Gastrocnemius medialis (tissue), 4 donors: ENCODE measurements at regions of chr9 and their contacts with region 1.

Region 1: DNA sequence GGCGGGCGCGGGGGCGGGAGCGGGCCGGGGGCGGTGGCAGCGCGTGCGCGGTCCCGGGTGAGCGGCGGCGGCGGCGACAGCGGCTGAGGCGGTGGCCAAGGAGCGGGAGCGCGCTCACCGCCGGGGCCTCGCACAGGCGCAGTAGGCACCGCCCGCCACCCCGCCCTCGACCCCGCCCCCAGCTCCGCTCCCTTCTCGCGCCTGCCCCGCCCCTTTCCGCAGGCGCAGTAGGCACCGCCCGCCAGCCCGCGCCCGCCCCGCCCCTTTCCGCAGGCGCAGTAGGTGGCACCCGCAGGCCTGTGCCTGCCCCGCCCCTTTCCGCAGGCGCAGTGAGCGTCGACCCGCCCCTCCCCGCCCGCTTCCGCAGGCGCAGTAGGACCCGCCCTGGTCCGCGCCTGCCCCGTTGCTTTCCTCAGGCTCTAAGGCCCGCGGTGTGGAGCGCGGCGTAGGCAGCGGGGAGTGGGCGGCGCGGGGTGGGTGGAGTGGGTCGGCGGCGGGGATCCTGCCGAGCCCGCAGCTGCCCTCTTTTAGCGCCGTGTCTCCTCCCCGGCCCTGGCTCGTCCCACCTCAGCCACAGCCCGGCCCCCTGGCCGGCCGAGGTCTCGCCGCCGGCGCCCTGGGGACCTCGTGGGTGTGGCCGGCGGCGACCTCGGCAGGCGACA is at the start of gene CAMSAP1:
- DNase-seq: peak; percentile 87 to 91
- ATAC-seq: peak; percentile 62 to 68
- H3K4me3 ChIP-seq: peak within 1 kb of the TSS; percentile 70 to 81 (median 72)
- H3K27ac ChIP-seq: peak within 1 kb of the TSS; percentile 90 to 92 (median 90)
- H3K4me1 ChIP-seq: peaks cover 47 to 52% of the 10 kb centered on the region in 2 donors
- H3K27me3 ChIP-seq: no peaks in the 10 kb centered on the region
- CTCF ChIP-seq: no peak
- POLR2A ChIP-seq: peak; percentile 92 to 94
- total RNA-seq, gene CAMSAP1: 54.8 to 94.9 (median 82.9) TPM

Region 2: GRCh38 chr9:135804581-135805421 is 102.8 kb before region 1 on chr9:
- in situ Hi-C with region 1: no loop called
- intact Hi-C with region 1: no loop called
- DNase-seq: no peak
- ATAC-seq: no peak
- H3K4me3 ChIP-seq: no peak overlapping the region
- H3K27ac ChIP-seq: no peak overlapping the region
- H3K4me1 ChIP-seq: no peaks in the 10 kb centered on the region
- H3K27me3 ChIP-seq: no peaks in the 10 kb centered on the region
- CTCF ChIP-seq: no peak
- POLR2A ChIP-seq: no peak

Region 3: DNA sequence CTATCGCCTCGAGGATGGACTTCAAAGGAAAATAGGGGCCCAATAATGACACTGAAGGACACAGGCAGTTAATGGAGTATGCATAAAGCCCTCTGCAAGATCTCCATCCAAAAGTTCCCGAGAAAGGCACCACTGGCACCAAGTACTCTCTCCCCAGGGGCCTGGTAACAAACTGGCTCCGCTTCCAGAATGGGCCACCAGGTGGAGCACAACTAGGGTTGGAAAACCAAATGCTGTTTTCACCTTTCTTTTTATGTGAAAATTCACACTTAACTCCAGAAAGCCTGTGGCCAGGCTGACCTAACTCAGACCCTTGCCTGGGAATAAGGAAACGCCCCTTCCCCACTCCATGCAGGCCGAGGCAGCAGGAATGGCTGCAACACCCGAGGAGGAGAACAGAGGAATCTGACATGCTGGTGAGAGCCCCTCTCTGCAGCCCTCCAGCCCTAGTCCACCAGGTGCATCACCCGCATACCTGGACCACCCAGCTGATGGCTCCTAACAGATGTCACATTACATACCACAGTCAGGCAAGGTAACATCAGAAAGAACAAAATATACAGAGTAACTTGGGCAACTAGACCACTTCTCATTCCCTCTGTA is 43.0 kb before region 1 on chr9:
- in situ Hi-C with region 1: no loop called
- intact Hi-C with region 1: loop called (anchors 2 kb)
- DNase-seq: peak in 1 of 2 donors; percentile 39
- ATAC-seq: peak in 1 of 2 donors; percentile 64
- H3K4me3 ChIP-seq: no peak overlapping the region
- H3K27ac ChIP-seq: no peak overlapping the region
- H3K4me1 ChIP-seq: peaks cover 4 to 9% of the 10 kb centered on the region in 2 donors
- H3K27me3 ChIP-seq: no peaks in the 10 kb centered on the region
- CTCF ChIP-seq: peak; percentile 64 to 88 (median 81)
- POLR2A ChIP-seq: no peak

Region 4: DNA sequence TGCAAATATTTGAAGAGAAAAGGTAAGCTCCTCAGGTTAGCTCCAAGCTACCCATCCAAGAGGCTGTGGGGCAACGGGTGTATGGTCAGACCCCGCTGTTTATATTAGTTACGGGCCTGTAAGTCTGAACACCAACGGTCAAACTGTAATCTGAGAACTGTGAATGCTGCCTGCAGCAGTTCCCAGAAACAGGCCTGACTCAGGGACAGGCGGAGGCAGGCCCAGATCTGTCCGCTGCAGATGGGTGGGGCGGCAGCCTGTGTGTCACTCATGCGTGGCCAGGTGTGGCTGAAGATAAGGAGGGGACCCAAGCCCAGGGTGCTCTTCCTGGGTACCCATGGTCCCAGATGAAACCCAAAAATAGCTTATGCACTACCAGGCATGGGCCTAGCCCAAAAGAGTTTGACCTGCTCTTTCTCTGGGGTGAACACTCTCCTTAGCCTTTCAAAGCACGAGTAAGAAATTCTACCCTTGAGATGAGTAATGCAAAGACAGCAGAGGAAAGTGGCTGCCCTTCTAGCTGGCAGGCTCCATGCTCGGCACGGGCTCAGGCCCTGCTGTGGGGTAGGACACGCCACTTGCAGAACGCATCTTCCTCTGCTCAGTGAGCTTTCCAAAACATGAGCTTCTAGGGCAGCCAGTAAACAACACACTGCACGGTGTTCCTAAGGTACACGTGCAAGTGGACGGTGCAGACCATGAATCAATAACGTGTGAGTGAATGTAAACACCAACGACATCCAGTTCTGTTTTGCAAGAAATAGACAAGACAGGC is 44.5 kb after region 1 on chr9:
- in situ Hi-C with region 1: no loop called
- intact Hi-C with region 1: loop called (anchors 2 kb)
- DNase-seq: peak; percentile 92 to 96
- ATAC-seq: peak; percentile 64 to 69
- H3K4me3 ChIP-seq: peak overlapping the region in 1 of 4 donors; percentile 18
- H3K27ac ChIP-seq: peak overlapping the region; percentile 97 to 100 (median 100)
- H3K4me1 ChIP-seq: peaks cover 85 to 87% of the 10 kb centered on the region in 2 donors
- H3K27me3 ChIP-seq: no peaks in the 10 kb centered on the region
- CTCF ChIP-seq: peak in 1 of 5 experiments; percentile 9
- POLR2A ChIP-seq: peak; percentile 44 to 66

Region 5: GRCh38 chr9:135971892-135972291 is 64.3 kb after region 1 on chr9:
- in situ Hi-C with region 1: no loop called
- intact Hi-C with region 1: no loop called
- DNase-seq: no peak
- ATAC-seq: no peak
- H3K4me3 ChIP-seq: no peak overlapping the region
- H3K27ac ChIP-seq: no peak overlapping the region
- H3K4me1 ChIP-seq: peaks cover 0 to 5% of the 10 kb centered on the region in 2 donors
- H3K27me3 ChIP-seq: no peaks in the 10 kb centered on the region
- CTCF ChIP-seq: no peak
- POLR2A ChIP-seq: no peak

Region 6: DNA sequence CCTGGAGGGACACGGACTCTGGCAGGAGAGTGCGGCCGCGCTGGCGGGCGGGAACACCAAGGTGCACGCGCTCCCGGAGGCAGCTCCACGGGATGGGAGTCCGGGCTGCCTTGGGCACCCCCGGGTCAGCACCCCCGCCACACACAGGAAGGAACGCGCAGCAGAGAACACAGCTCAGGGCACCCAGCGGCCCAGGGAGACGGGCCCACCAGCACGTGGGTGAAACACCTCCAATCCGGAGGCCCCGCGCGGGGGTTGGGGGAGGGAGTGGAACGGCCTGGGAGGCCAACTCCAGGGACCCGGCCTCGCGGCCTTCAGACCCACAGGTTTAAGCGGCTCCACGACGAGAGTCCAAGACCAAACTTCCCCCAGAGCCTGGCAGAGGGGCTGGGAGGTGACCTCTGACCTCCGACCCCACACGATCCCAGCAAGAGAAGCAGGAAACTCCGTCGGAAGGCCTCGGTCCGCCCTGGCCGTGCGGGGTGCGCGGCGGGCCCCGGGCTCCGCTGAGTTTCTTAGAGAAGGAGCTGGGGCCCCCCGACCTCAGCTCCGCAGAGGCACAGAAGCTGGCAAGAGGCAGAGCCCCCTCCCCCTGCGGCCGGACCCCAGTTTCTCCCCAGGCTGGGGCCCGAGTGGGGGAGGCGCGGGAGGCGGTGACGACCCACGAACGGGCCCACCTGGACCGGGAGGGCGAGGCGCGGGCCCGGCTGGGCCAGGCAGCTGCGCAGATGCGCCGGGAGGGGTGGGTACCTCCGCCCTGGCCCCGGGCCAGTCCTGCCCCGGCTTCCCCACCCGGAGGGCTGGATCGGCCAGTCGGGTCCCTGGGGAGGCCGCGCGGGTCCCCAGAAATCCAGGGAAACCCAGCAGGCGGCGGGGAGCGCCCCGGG is 186.7 kb after region 1 on chr9:
- in situ Hi-C with region 1: no loop called
- intact Hi-C with region 1: loop called (anchors 5 kb)
- DNase-seq: peak; percentile 91 to 93
- ATAC-seq: peak; percentile 51 to 57
- H3K4me3 ChIP-seq: peak overlapping the region; percentile 67 to 90 (median 78)
- H3K27ac ChIP-seq: peak overlapping the region; percentile 95 to 100 (median 98)
- H3K4me1 ChIP-seq: peaks cover 51 to 57% of the 10 kb centered on the region in 2 donors
- H3K27me3 ChIP-seq: no peaks in the 10 kb centered on the region
- CTCF ChIP-seq: peak in 2 of 5 experiments; percentile 24 to 27
- POLR2A ChIP-seq: peak; percentile 78 to 86

Region 7: GRCh38 chr9:136363606-136364370 is 456.2 kb after region 1 on chr9 and contains the start of gene DNLZ:
- in situ Hi-C with region 1: no loop called
- intact Hi-C with region 1: loop called (anchors 5 kb)
- DNase-seq: peak; percentile 65 to 72
- ATAC-seq: peak; percentile 88
- H3K4me3 ChIP-seq: peak within 1 kb of the TSS; percentile 68 to 86 (median 78)
- H3K27ac ChIP-seq: peak within 1 kb of the TSS; percentile 81 to 96 (median 94)
- H3K4me1 ChIP-seq: peaks cover 7 to 9% of the 10 kb centered on the region in 2 donors
- H3K27me3 ChIP-seq: no peaks in the 10 kb centered on the region
- CTCF ChIP-seq: peak; percentile 88 to 100 (median 99)
- POLR2A ChIP-seq: peak; percentile 62 to 75
- total RNA-seq, gene DNLZ: 37.9 to 65.1 (median 54.3) TPM